ENCODE measurements at regions of chr17 and their contacts with region 1.

Region 1: DNA sequence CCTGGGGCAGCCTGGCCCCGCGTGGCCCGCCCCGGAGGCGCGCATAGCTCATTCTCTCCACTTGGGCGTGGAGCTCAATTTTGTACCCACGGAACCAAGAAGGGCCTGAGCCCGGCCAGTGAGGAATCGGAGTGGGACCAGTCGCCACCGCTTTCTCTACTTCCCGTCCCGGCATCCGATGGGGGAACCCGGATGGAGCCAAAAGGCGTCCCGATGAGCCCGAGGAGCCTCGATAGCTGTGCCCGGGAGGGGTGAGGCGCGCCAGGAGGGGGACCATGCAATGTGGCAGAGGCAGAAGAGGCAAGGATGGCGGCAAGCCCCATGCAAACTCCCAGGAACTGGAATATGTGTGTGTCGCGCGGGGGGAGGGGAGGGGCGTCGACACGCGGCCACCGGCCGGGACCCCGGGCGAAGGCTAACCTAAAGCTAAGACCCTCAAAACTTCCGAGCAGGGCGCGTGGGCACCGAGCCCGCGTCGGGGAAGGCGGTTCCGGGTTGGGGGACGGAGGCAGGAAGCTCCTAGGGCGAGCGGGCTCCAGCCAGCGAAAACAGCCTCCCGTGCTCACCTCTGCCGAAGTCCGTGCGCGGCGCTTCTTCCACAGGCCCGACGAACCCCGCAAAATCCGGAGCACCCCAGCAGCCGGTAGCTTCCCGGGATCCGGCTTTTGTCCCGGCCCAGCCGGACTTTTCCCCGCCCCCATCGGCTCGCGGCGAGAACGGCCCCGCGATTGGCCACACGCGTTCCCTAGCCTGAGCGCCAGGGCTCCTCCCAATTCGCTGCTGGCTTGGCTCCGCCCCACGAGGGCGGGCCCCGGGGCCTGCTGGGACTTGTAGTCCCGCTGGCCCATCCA is at the start of gene ACLY:
- DNase-seq: peak; percentile 94 to 98
- H3K4me3 ChIP-seq: peak within 1 kb of the TSS; percentile 74 to 99 (median 93)
- H3K27ac ChIP-seq: peak within 1 kb of the TSS; percentile 85
- H3K4me1 ChIP-seq: peaks cover 13 to 31% (median 24%) of the 10 kb centered on the region in 4 experiments
- H3K27me3 ChIP-seq: no peaks in the 10 kb centered on the region
- CTCF ChIP-seq: 0 out of 4 replicates have a peak, but pooled peaks of 1 of the 3 experiments have one; percentile 5
- EP300 ChIP-seq: no peak; a peak in 1 of 3 replicates
- POLR2A ChIP-seq: peak; percentile 30 to 95
- RAD21 ChIP-seq: no peak
- total RNA-seq, gene ACLY: 388 and 393 TPM in 2 replicates

Region 2: DNA sequence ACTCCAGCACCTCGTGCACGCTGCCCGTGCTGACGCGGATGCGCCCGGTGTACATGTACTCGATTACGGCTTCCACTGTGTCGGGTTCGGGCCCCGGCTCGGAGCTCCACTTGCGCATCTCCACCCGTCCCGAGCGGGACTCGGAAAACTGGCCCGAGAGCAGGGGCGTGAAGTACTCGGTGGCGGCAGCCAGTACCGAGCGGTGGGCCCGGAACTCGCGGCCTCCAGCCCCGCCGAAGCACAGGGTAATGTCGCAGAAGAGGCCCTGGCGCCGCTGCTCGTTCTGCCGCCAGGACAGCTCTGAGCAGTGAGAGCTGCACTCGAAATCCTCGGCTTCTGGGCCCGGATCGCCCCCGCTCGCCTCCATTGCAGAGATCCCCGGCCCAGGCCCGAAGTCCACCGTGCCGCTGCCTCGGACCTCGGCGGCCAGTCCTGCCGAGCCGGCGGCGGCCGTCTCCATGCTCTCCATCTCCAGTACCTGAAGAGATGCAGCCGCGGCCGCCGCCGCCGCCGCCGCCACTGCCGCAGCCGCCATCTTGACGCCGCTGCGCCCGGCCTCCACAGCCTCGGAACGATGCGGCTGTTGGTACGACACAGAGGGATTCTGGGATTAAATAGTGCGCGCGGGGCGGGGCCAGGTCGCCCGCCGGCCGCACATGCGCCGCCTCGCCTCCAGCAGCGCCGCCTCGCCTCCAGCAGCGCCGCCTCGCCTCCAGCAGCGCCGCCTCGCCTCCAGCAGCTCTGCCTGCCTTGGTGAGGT is 53.5 kb before region 1 on chr17 and contains the start of gene KLHL11:
- CTCF ChIA-PET with region 1: no interaction called
- POLR2A ChIA-PET with region 1: interaction called, 21 read pairs
- DNase-seq: peak; percentile 58 to 90
- H3K4me3 ChIP-seq: peak within 1 kb of the TSS; percentile 86 to 94 (median 92)
- H3K27ac ChIP-seq: peak within 1 kb of the TSS; percentile 42
- H3K4me1 ChIP-seq: peaks cover 9 to 25% (median 13%) of the 10 kb centered on the region in 4 experiments
- H3K27me3 ChIP-seq: no peaks in the 10 kb centered on the region
- CTCF ChIP-seq: no peak; a peak in 1 of 4 replicates
- EP300 ChIP-seq: peak in 1 of 2 experiments; percentile 56; a peak in 1 of 3 replicates
- POLR2A ChIP-seq: peak; percentile 42 to 87
- RAD21 ChIP-seq: peak in 1 of 2 experiments; percentile 0; a peak in 2 of 4 replicates
- total RNA-seq, gene KLHL11: 12.8 and 13.7 TPM in 2 replicates

Region 3: DNA sequence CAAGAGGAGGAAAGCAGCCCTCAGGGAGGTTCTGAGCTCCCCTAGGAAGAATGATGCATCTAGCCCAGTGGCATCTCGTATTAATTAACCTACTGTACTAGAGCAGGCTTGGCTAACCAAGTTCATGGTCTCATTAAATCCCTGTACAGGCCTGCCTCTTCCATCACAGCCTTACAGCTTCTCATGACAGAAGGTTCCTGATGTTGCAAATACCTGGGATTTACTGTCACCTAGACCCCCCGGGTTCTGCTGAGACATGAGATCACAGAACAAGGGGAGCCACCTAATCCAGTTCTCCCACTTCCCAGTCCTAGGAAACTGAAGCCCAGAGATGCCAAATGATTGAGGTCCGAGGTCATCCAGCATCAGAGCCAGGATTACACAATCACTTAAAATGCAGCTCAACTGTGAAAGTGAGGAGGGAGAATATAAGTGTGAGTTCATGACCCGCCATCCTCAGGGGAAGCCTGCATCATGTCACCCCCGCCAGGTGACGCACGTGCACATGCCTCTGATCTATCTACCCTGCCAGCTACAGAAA is 23.7 kb before region 1 on chr17:
- CTCF ChIA-PET with region 1: interaction called, 12 read pairs
- POLR2A ChIA-PET with region 1: interaction called, 33 read pairs
- DNase-seq: no peak
- H3K4me3 ChIP-seq: no peak overlapping the region
- H3K27ac ChIP-seq: no peak overlapping the region
- H3K4me1 ChIP-seq: no peaks in the 10 kb centered on the region
- H3K27me3 ChIP-seq: no peaks in the 10 kb centered on the region
- CTCF ChIP-seq: no peak
- EP300 ChIP-seq: no peak
- POLR2A ChIP-seq: no peak
- RAD21 ChIP-seq: no peak

Region 4: GRCh38 chr17:41930009-41930832 is 11.7 kb after region 1 on chr17 and contains the start of gene ODAD4:
- CTCF ChIA-PET with region 1: interaction called, 18 read pairs
- POLR2A ChIA-PET with region 1: interaction called, 64 read pairs
- DNase-seq: peak; percentile 77 to 92
- H3K4me3 ChIP-seq: peak within 1 kb of the TSS; percentile 71 to 81 (median 75)
- H3K27ac ChIP-seq: peak within 1 kb of the TSS; percentile 28
- H3K4me1 ChIP-seq: peaks cover 0 to 4% (median 2%) of the 10 kb centered on the region in 4 experiments; a peak in 2 of 7 replicates
- H3K27me3 ChIP-seq: no peaks in the 10 kb centered on the region
- CTCF ChIP-seq: peak in 2 of 3 experiments; percentile 30 to 47; a peak in 3 of 4 replicates
- EP300 ChIP-seq: no peak
- POLR2A ChIP-seq: peak in 1 of 2 experiments; percentile 84; a peak in 2 of 3 replicates
- RAD21 ChIP-seq: peak; percentile 36 to 46
- total RNA-seq, gene ODAD4: 1.3 TPM in 2 replicates

Region 5: GRCh38 chr17:41966463-41967140 is 48.1 kb after region 1 on chr17 and contains the start of gene CNP:
- CTCF ChIA-PET with region 1: interaction called, 205 read pairs
- POLR2A ChIA-PET with region 1: interaction called, 67 read pairs
- DNase-seq: peak in 1 of 2 experiments; percentile 90
- H3K4me3 ChIP-seq: peak within 1 kb of the TSS; percentile 71 to 96 (median 78)
- H3K27ac ChIP-seq: peak within 1 kb of the TSS; percentile 65
- H3K4me1 ChIP-seq: peaks cover 0 to 10% (median 5%) of the 10 kb centered on the region in 4 experiments; a peak in 6 of 7 replicates
- H3K27me3 ChIP-seq: no peaks in the 10 kb centered on the region
- CTCF ChIP-seq: no peak
- EP300 ChIP-seq: 0 out of 3 replicates have a peak, but pooled peaks of 1 of the 2 experiments have one; percentile 7
- POLR2A ChIP-seq: peak; percentile 49 to 53; a peak in 2 of 3 replicates
- RAD21 ChIP-seq: no peak
- total RNA-seq, gene CNP: 60.6 and 64.2 TPM in 2 replicates

Region 6: GRCh38 chr17:42055496-42055895 is 137.0 kb after region 1 on chr17:
- CTCF ChIA-PET with region 1: no interaction called
- POLR2A ChIA-PET with region 1: no interaction called
- DNase-seq: no peak
- H3K4me3 ChIP-seq: no peak overlapping the region; a peak in 2 of 8 replicates
- H3K27ac ChIP-seq: no peak overlapping the region
- H3K4me1 ChIP-seq: peaks cover 0 to 26% (median 14%) of the 10 kb centered on the region in 4 experiments; a peak in 6 of 7 replicates
- H3K27me3 ChIP-seq: peaks cover 0 to 3% (median 0%) of the 10 kb centered on the region in 4 experiments; a peak in 2 of 7 replicates
- CTCF ChIP-seq: no peak
- EP300 ChIP-seq: no peak
- POLR2A ChIP-seq: no peak
- RAD21 ChIP-seq: no peak

Measured in H1 (cell line).